ENCODE measurements at regions of chr19 and their contacts with region 1.

Region 1: GRCh38 chr19:7385062-7385461 is 36.3 kb downstream of the ARHGEF18 start:
- DNase-seq: no peak
- ATAC-seq: no peak
- H3K4me3 Mint-ChIP-seq: no peak overlapping the region
- H3K27ac Mint-ChIP-seq: peak overlapping the region; percentile 66
- H3K4me1 Mint-ChIP-seq: peaks cover 26% of the 10 kb centered on the region
- H3K27me3 Mint-ChIP-seq: no peaks in the 10 kb centered on the region
- CTCF ChIP-seq: no peak

Region 2: GRCh38 chr19:7355151-7355820 is 29.8 kb before region 1 on chr19:
- CTCF ChIA-PET with region 1: interaction called, 23 read pairs
- POLR2A ChIA-PET with region 1: interaction called, 7 read pairs
- intact Hi-C with region 1: loop called (anchors 1 kb)
- DNase-seq: no peak
- ATAC-seq: no peak
- H3K4me3 Mint-ChIP-seq: peak overlapping the region; percentile 41
- H3K27ac Mint-ChIP-seq: peak overlapping the region; percentile 86
- H3K4me1 Mint-ChIP-seq: peaks cover 82% of the 10 kb centered on the region
- H3K27me3 Mint-ChIP-seq: no peaks in the 10 kb centered on the region
- CTCF ChIP-seq: no peak

Region 3: GRCh38 chr19:7366701-7367420 is 18.2 kb before region 1 on chr19:
- CTCF ChIA-PET with region 1: interaction called, 4 read pairs
- POLR2A ChIA-PET with region 1: interaction called, 10 read pairs
- intact Hi-C with region 1: no loop called
- DNase-seq: no peak
- ATAC-seq: peak; percentile 84
- H3K4me3 Mint-ChIP-seq: no peak overlapping the region
- H3K27ac Mint-ChIP-seq: peak overlapping the region; percentile 80
- H3K4me1 Mint-ChIP-seq: peaks cover 26% of the 10 kb centered on the region
- H3K27me3 Mint-ChIP-seq: no peaks in the 10 kb centered on the region
- CTCF ChIP-seq: no peak

Region 4: GRCh38 chr19:7618771-7619514 is 233.9 kb after region 1 on chr19:
- CTCF ChIA-PET with region 1: no interaction called
- POLR2A ChIA-PET with region 1: no interaction called
- intact Hi-C with region 1: no loop called
- DNase-seq: no peak
- ATAC-seq: no peak
- H3K4me3 Mint-ChIP-seq: no peak overlapping the region
- H3K27ac Mint-ChIP-seq: no peak overlapping the region
- H3K4me1 Mint-ChIP-seq: no peaks in the 10 kb centered on the region
- H3K27me3 Mint-ChIP-seq: no peaks in the 10 kb centered on the region
- CTCF ChIP-seq: no peak